A673 (cell line): ENCODE measurements at regions of chr12 and their contacts with region 1.

Region 1: DNA sequence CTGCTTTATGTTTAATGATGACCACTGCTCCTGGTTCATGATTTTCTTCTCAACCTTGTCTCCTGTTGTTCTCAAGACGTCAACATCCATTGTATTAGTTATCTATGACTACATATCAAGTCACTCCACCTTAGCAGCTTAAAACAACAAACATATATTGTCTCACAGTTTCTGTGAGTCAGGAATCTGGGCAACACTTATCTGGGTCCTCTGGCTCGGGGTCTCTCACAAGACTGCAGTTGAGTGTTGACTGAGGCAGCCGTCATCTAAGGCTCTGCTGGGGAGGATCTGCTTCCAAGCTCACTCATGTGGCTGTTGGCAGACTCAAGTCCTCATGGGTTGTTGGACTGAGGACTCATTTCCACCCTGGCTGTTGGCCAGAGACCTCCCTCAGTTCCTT is 27.3 kb upstream of the FRS2 start:
- DNase-seq: no peak
- H3K4me3 ChIP-seq: no peak overlapping the region
- H3K27ac ChIP-seq: no peak overlapping the region
- H3K4me1 ChIP-seq: no peaks in the 10 kb centered on the region
- H3K27me3 ChIP-seq: no peaks in the 10 kb centered on the region
- CTCF ChIP-seq: no peak

Region 2: DNA sequence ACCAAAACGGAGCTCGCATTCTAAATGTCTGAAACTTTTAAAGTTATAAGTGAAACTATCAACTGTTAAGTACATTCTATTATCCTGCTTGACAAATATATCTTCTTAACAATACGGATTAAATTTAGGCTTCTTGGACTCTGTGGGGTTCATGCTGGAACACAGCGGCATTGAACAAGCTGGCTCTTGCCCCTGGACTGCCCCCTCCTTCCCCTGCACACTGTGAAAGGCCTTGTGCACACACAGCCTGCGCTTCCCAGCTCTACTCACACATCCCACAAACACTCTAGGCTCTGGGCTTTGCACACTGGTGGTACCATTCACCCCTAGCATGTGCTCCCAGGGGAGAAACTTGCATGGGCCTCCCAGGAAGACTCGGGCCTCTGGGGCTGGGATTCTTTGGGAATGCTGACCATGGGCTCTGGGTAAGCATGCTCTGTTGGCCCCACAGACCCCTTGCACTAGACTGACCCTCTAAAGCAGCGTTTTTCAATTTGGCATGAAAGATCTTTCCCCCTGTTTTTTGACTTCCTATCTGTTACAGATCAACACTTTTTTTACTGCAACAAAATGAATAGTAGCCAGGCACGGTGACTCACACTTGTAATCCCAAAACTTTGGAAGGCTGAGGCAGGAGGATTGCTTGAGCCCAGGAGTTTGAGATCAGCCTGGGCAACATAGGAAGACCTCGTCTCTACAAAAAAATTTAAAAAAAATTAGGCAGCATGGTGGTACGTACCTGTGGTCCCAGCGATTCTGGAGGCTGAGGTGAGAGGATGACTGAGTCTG is 413.8 kb before region 1 on chr12:
- CTCF ChIA-PET with region 1: no interaction called
- POLR2A ChIA-PET with region 1: interaction called, 23 read pairs
- intact Hi-C with region 1: no loop called
- DNase-seq: no peak
- H3K4me3 ChIP-seq: no peak overlapping the region
- H3K27ac ChIP-seq: no peak overlapping the region
- H3K4me1 ChIP-seq: no peaks in the 10 kb centered on the region
- H3K27me3 ChIP-seq: no peaks in the 10 kb centered on the region
- CTCF ChIP-seq: no peak

Region 3: GRCh38 chr12:69405466-69405865 is 37.4 kb before region 1 on chr12:
- CTCF ChIA-PET with region 1: no interaction called
- POLR2A ChIA-PET with region 1: no interaction called
- intact Hi-C with region 1: no loop called
- DNase-seq: peak; percentile 18
- H3K4me3 ChIP-seq: no peak overlapping the region
- H3K27ac ChIP-seq: no peak overlapping the region
- H3K4me1 ChIP-seq: no peaks in the 10 kb centered on the region
- H3K27me3 ChIP-seq: no peaks in the 10 kb centered on the region
- CTCF ChIP-seq: no peak

Region 4: GRCh38 chr12:69655377-69656336 is 212.8 kb after region 1 on chr12:
- CTCF ChIA-PET with region 1: no interaction called
- POLR2A ChIA-PET with region 1: no interaction called
- intact Hi-C with region 1: no loop called
- DNase-seq: no peak
- H3K4me3 ChIP-seq: no peak overlapping the region
- H3K27ac ChIP-seq: no peak overlapping the region
- H3K4me1 ChIP-seq: no peaks in the 10 kb centered on the region
- H3K27me3 ChIP-seq: no peaks in the 10 kb centered on the region
- CTCF ChIP-seq: no peak